ENCODE measurements at regions of chr15 and their contacts with region 1.

Region 1: DNA sequence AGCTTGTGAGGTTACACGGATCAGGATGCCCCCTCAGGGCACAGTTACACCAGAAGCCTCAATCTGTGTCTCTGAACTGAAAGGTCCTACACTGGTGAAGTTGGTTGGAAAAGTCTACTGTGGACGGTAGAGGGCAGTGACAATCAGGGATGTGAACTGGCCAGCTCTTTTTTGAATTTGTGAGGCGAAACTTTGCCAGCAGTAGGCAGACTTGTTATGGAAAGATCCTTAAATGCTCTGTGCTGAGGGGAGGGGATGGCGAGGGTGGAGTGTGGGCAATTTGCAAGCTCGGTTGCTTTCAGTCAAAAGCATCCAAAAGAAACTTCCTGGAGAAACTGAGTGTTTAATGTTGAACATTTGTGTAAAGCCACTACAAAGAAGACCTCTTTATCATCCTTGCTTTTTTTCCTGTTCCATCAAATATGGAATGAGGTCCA is 127.4 kb upstream of the ABHD17C start:
- DNase-seq: peak; percentile 84 to 89
- ATAC-seq: peak; percentile 89 to 97
- H3K4me3 ChIP-seq: no peak overlapping the region
- H3K27ac ChIP-seq: no peak overlapping the region
- H3K4me1 ChIP-seq: no peaks in the 10 kb centered on the region
- CTCF ChIP-seq: peak; percentile 99
- EP300 ChIP-seq: no peak
- POLR2A ChIP-seq: no peak
- RAD21 ChIP-seq: peak; percentile 98

Region 2: GRCh38 chr15:80343554-80343992 is 224.2 kb before region 1 on chr15:
- CTCF ChIA-PET with region 1: no interaction called
- POLR2A ChIA-PET with region 1: no interaction called
- DNase-seq: no peak
- ATAC-seq: no peak
- H3K4me3 ChIP-seq: no peak overlapping the region
- H3K27ac ChIP-seq: no peak overlapping the region
- H3K4me1 ChIP-seq: no peaks in the 10 kb centered on the region
- CTCF ChIP-seq: no peak
- EP300 ChIP-seq: no peak
- POLR2A ChIP-seq: no peak
- RAD21 ChIP-seq: no peak

Region 3: GRCh38 chr15:80480909-80481308 is 86.8 kb before region 1 on chr15:
- CTCF ChIA-PET with region 1: interaction called, 27 read pairs
- POLR2A ChIA-PET with region 1: no interaction called
- DNase-seq: no peak
- ATAC-seq: peak; percentile 38 to 74; a peak in 3 of 6 replicates
- H3K4me3 ChIP-seq: no peak overlapping the region
- H3K27ac ChIP-seq: peak overlapping the region in 1 of 2 experiments; percentile 12; a peak in 1 of 6 replicates
- H3K4me1 ChIP-seq: peaks cover 15% of the 10 kb centered on the region; the same call in 2 of the 3 replicates
- CTCF ChIP-seq: no peak
- EP300 ChIP-seq: no peak
- POLR2A ChIP-seq: no peak
- RAD21 ChIP-seq: no peak

Region 4: DNA sequence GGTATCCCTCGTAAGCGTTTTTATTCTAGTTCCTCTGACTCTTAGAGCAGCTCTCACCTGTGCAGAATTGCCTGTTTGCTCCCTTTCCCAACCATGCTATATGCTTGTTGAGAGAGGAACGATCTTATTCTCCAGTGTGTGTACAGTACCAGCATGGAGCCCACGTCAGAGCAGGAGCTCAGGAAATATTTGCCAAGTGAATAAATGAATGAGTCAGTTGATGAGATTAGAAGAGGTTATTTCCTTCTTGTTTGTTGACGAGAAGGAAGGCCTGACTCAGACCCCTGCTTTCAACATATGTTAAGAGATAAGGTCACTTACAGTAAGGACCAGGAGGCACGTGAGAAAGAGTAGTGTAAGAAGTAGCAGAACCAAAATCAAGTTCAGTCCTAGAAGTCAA is 21.1 kb after region 1 on chr15:
- CTCF ChIA-PET with region 1: interaction called, 41 read pairs
- POLR2A ChIA-PET with region 1: no interaction called
- DNase-seq: peak; percentile 80 to 90
- ATAC-seq: peak; percentile 85 to 90
- H3K4me3 ChIP-seq: 0 out of 3 replicates have a peak overlapping the region, but pooled peaks have one; percentile 4
- H3K27ac ChIP-seq: peak overlapping the region; percentile 72 to 79
- H3K4me1 ChIP-seq: peaks cover 47% of the 10 kb centered on the region
- CTCF ChIP-seq: no peak
- EP300 ChIP-seq: peak; percentile 77 to 86; a peak in 3 of 5 replicates
- POLR2A ChIP-seq: no peak
- RAD21 ChIP-seq: no peak; a peak in 1 of 5 replicates

Region 5: GRCh38 chr15:80660122-80660521 is 92.4 kb after region 1 on chr15:
- CTCF ChIA-PET with region 1: interaction called, 26 read pairs
- POLR2A ChIA-PET with region 1: no interaction called
- DNase-seq: peak; percentile 55 to 63
- ATAC-seq: peak; percentile 98 to 100
- H3K4me3 ChIP-seq: no peak overlapping the region
- H3K27ac ChIP-seq: no peak overlapping the region
- H3K4me1 ChIP-seq: no peaks in the 10 kb centered on the region
- CTCF ChIP-seq: peak; percentile 53
- EP300 ChIP-seq: no peak
- POLR2A ChIP-seq: no peak
- RAD21 ChIP-seq: peak; percentile 60 to 73

Region 6: DNA sequence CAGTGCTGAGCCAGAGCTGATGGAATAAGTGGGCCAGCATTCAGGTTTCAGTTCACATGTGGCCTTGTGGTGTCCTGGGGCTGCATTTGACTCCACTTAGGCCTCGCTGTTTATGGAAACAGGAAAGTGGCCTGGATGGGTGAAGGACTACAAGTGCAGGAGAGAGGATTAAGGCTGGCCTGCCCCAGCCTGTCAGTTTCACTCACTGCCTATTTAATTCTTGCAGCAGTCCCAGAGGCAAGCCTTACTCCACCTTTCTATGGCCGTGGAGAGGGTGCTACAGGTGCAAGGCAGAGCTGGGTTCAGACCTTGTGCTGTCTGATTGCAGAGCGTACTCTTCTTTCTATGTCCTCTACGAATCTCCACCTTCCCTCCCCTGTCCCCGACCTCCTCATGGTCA is 165.1 kb after region 1 on chr15:
- CTCF ChIA-PET with region 1: interaction called, 10 read pairs
- POLR2A ChIA-PET with region 1: no interaction called
- DNase-seq: no peak
- ATAC-seq: no peak
- H3K4me3 ChIP-seq: no peak overlapping the region
- H3K27ac ChIP-seq: no peak overlapping the region
- H3K4me1 ChIP-seq: no peaks in the 10 kb centered on the region
- CTCF ChIP-seq: no peak
- EP300 ChIP-seq: no peak
- POLR2A ChIP-seq: no peak
- RAD21 ChIP-seq: no peak

Region 7: GRCh38 chr15:80783260-80783659 is 215.5 kb after region 1 on chr15:
- CTCF ChIA-PET with region 1: interaction called, 362 read pairs
- POLR2A ChIA-PET with region 1: interaction called, 5 read pairs
- DNase-seq: no peak
- ATAC-seq: no peak
- H3K4me3 ChIP-seq: no peak overlapping the region
- H3K27ac ChIP-seq: no peak overlapping the region
- H3K4me1 ChIP-seq: peaks cover 12% of the 10 kb centered on the region; the same call in 2 of the 3 replicates
- CTCF ChIP-seq: no peak
- EP300 ChIP-seq: no peak
- POLR2A ChIP-seq: no peak
- RAD21 ChIP-seq: no peak

Measured in A549 (cell line).